ENCODE measurements at regions of chr3 and their contacts with region 1.

Region 1: DNA sequence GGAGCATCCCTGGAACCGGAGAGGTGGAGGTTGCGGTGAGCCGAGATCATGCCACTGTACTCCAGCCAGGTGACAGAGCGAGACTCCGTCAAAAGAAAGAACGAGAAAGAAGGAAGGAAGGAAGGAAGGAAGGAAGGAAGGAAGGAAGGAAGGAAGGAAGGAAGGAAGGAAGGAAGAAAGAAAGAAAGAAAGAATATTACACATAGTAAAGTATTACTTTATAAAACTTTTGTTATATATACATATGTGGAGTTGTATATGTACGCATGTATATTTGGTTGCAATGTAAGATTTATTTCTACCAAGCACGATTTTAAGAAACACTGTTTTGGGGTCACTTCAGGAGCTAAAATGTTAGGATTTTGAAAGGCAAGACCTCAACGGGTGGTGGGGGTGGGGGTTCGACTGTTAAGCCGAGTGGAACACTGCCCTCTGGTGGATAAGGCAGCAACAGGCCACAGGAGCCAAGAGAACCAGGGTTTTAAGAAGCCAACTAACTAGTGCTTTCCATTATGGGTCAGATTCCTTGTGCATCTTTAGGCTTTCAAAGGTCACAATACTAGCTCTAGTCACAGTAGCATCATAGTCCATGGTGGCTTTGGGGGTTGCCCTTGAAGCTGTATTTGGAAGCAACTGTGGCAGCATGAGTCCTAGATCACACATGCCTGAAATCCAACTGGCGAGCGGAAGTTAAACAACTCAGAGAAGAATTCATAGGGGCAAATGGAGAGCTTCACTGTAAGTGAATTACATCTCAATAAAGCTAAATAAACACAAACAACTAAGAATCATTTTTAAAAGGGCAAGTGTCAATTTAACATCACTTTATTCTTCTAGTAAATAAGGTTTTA is 22.5 kb downstream of the GLB1 start:
- DNase-seq: peak; percentile 31 to 79 (median 70)
- ATAC-seq: peak; percentile 73
- H3K4me3 ChIP-seq: no peak overlapping the region
- H3K4me3 Mint-ChIP-seq: no peak overlapping the region
- H3K27ac ChIP-seq: no peak overlapping the region
- H3K27ac Mint-ChIP-seq: no peak overlapping the region
- H3K4me1 ChIP-seq: no peaks in the 10 kb centered on the region
- H3K4me1 Mint-ChIP-seq: peaks cover 9% of the 10 kb centered on the region
- H3K27me3 ChIP-seq: no peaks in the 10 kb centered on the region
- H3K27me3 Mint-ChIP-seq: no peaks in the 10 kb centered on the region
- CTCF ChIP-seq: peak; percentile 77

Region 2: DNA sequence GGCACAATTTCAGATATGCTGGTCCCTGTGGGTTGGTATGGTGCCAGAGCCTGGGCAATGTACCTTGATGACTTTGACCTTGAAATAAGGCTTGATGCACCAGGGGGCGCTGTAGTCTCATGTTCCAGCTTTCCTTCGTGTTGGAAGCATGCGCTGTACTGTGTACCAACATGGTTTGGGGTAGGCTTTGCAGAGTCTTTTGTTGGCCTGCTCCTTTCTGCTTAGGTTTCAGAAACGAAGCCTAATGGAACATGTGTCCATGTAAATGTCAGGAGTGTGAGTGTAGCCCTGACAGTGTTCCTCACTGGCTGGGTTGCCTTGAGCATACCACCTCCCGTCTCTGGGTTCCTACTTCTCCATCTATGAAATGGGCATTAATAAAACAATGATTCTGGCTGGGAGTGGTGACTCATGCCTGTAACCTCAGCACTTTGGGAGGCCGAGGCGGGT is 126.6 kb before region 1 on chr3:
- CTCF ChIA-PET with region 1: interaction called, 272 read pairs
- POLR2A ChIA-PET with region 1: interaction called, 9 read pairs
- intact Hi-C with region 1: loop called (anchors 1 kb)
- DNase-seq: peak; percentile 82 to 96 (median 87)
- ATAC-seq: peak; percentile 79
- H3K4me3 ChIP-seq: no peak overlapping the region
- H3K4me3 Mint-ChIP-seq: no peak overlapping the region
- H3K27ac ChIP-seq: no peak overlapping the region
- H3K27ac Mint-ChIP-seq: no peak overlapping the region
- H3K4me1 ChIP-seq: peaks cover 4% of the 10 kb centered on the region
- H3K4me1 Mint-ChIP-seq: peaks cover 16% of the 10 kb centered on the region
- H3K27me3 ChIP-seq: no peaks in the 10 kb centered on the region
- H3K27me3 Mint-ChIP-seq: no peaks in the 10 kb centered on the region
- CTCF ChIP-seq: peak; percentile 78

Region 3: DNA sequence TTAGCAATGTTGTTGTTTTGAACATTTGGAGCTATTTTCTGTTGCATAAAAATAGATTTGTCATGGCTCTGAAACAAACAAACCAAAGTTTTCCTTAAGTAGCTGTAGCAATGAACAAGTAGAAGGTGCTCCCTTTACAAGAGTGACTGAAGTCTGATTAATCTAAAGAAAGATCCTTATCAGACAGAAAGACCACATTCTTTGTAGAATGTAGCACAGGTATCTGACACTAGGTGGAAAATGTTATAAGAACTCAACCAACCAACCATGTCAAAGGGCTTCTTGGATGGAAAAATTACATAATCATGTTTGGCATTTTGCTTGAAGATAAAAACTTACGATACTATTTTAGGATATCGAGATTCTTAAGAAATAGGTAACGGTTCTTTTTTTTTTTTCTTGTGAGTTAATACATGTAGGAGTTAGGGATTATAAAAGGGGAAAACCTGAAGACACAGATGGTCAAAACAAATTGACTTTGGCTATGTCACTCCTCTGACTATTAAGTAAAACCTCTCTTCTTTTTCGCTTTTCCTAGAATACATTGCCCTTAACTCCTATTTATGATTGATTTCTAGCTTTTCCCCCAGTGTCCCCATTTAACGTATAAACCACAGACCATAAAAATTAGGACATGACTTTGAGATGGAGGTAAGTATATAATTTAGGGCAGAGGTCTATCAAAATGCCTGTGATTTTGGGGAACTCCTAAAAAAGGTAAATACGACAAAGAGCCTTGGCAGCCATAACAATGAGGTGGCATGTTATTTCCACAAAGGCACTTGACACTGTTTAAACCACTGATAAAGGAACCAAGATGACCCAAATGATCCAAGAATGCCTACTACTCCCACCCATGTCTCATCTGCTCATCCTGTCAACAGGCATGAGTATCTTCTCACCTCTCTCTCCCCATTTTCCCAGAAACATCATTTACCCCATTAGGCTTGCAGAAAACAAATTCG is 51.0 kb before region 1 on chr3:
- CTCF ChIA-PET with region 1: interaction called, 23 read pairs
- POLR2A ChIA-PET with region 1: interaction called, 3 read pairs
- intact Hi-C with region 1: loop called (anchors 5 kb)
- DNase-seq: peak in 1 of 9 experiments; percentile 28
- ATAC-seq: peak; percentile 70
- H3K4me3 ChIP-seq: no peak overlapping the region
- H3K4me3 Mint-ChIP-seq: no peak overlapping the region
- H3K27ac ChIP-seq: no peak overlapping the region
- H3K27ac Mint-ChIP-seq: no peak overlapping the region
- H3K4me1 ChIP-seq: peaks cover 7% of the 10 kb centered on the region
- H3K4me1 Mint-ChIP-seq: peaks cover 28% of the 10 kb centered on the region
- H3K27me3 ChIP-seq: no peaks in the 10 kb centered on the region
- H3K27me3 Mint-ChIP-seq: no peaks in the 10 kb centered on the region
- CTCF ChIP-seq: no peak

Region 4: GRCh38 chr3:33041909-33042308 is 32.5 kb before region 1 on chr3:
- CTCF ChIA-PET with region 1: interaction called, 45 read pairs
- POLR2A ChIA-PET with region 1: interaction called, 4 read pairs
- intact Hi-C with region 1: loop called in 1 of 2 experiments (anchors 5 kb)
- DNase-seq: no peak
- ATAC-seq: no peak
- H3K4me3 ChIP-seq: no peak overlapping the region
- H3K4me3 Mint-ChIP-seq: no peak overlapping the region
- H3K27ac ChIP-seq: no peak overlapping the region
- H3K27ac Mint-ChIP-seq: no peak overlapping the region
- H3K4me1 ChIP-seq: peaks cover 33% of the 10 kb centered on the region
- H3K4me1 Mint-ChIP-seq: peaks cover 39% of the 10 kb centered on the region
- H3K27me3 ChIP-seq: no peaks in the 10 kb centered on the region
- H3K27me3 Mint-ChIP-seq: no peaks in the 10 kb centered on the region
- CTCF ChIP-seq: no peak

Region 5: DNA sequence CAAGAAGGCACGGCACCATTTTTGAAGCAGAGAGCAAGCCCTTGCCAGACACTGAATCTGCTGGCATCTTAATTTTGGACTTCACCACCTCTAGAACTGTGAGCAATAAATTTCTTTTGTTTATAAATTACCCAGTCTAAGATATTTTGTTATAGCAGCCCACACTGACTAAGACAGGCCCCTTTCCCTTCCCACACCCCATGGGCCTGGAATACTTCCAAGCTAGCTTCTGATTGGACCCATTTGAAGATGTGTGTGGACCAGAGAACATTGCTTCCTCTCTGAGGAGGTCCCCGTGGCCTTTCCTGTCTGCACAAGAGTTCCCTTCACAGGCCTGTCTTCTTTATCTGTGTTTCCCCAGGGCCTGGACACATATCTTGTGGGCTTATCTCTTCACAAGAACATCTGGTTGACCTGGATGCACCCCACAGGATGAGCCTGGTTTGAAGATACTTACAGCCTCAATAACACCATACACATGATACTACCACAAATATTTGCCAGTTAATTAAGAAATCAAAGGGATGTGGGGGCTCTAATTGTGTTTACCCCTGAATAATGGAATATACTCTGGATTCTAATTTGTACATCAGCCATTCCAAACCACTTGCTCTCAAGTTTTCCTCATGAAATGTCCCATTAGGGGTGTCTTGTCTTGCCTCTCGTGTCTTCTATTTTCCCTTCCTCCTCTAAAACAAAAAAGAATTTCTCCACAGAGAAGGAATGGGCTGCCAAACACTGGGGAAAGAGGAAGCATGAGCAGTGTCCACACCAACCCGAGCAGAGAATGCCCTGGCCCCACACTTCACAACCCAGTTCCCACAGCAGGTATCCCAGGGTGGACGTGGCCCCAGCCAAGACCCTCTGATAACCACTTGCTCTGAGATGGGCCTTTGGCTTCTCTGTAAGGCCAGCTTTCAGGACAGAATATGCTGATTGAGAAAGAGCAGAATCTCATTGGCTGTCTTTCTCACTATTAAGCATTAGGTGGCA is 20.0 kb before region 1 on chr3:
- CTCF ChIA-PET with region 1: interaction called, 45 read pairs
- POLR2A ChIA-PET with region 1: no interaction called
- intact Hi-C with region 1: no loop called
- DNase-seq: peak in 1 of 9 experiments; percentile 20
- ATAC-seq: no peak
- H3K4me3 ChIP-seq: peak overlapping the region in 1 of 2 experiments; percentile 17
- H3K4me3 Mint-ChIP-seq: no peak overlapping the region
- H3K27ac ChIP-seq: peak overlapping the region in 1 of 2 experiments; percentile 70
- H3K27ac Mint-ChIP-seq: peak overlapping the region; percentile 74
- H3K4me1 ChIP-seq: peaks cover 19% of the 10 kb centered on the region
- H3K4me1 Mint-ChIP-seq: peaks cover 55% of the 10 kb centered on the region
- H3K27me3 ChIP-seq: no peaks in the 10 kb centered on the region
- H3K27me3 Mint-ChIP-seq: no peaks in the 10 kb centered on the region
- CTCF ChIP-seq: no peak

Region 6: DNA sequence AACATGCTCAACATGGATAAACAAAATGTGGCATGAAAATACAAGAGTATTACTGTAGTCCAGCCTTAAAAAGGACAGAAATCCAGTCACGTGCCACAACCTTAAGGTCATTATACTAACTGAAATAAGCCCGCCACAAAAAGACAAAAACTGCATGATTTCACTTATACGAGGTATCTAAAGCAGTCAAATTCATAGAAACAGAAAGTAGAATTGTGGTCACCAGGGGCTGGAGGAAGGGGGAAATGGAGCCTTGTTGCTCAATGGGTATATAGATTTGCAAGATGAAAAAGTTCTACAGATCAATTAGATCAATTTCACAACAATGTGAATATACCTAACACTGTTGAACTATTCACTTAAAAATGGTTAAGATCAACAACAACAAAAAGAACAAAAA is 15.1 kb after region 1 on chr3:
- CTCF ChIA-PET with region 1: interaction called, 35 read pairs
- POLR2A ChIA-PET with region 1: interaction called, 3 read pairs
- intact Hi-C with region 1: no loop called
- DNase-seq: peak in 2 of 9 experiments; percentile 31 to 55
- ATAC-seq: peak; percentile 63
- H3K4me3 ChIP-seq: no peak overlapping the region
- H3K4me3 Mint-ChIP-seq: peak overlapping the region; percentile 13
- H3K27ac ChIP-seq: peak overlapping the region in 1 of 2 experiments; percentile 45
- H3K27ac Mint-ChIP-seq: peak overlapping the region; percentile 8
- H3K4me1 ChIP-seq: peaks cover 6% of the 10 kb centered on the region
- H3K4me1 Mint-ChIP-seq: peaks cover 71% of the 10 kb centered on the region
- H3K27me3 ChIP-seq: no peaks in the 10 kb centered on the region
- H3K27me3 Mint-ChIP-seq: no peaks in the 10 kb centered on the region
- CTCF ChIP-seq: no peak

Region 7: GRCh38 chr3:33360136-33360825 is 285.8 kb after region 1 on chr3:
- CTCF ChIA-PET with region 1: no interaction called
- POLR2A ChIA-PET with region 1: no interaction called
- intact Hi-C with region 1: no loop called
- DNase-seq: no peak
- ATAC-seq: no peak
- H3K4me3 ChIP-seq: no peak overlapping the region
- H3K4me3 Mint-ChIP-seq: no peak overlapping the region
- H3K27ac ChIP-seq: no peak overlapping the region
- H3K27ac Mint-ChIP-seq: no peak overlapping the region
- H3K4me1 ChIP-seq: no peaks in the 10 kb centered on the region
- H3K4me1 Mint-ChIP-seq: no peaks in the 10 kb centered on the region
- H3K27me3 ChIP-seq: no peaks in the 10 kb centered on the region
- H3K27me3 Mint-ChIP-seq: peaks cover 20% of the 10 kb centered on the region
- CTCF ChIP-seq: no peak

Region 8: DNA sequence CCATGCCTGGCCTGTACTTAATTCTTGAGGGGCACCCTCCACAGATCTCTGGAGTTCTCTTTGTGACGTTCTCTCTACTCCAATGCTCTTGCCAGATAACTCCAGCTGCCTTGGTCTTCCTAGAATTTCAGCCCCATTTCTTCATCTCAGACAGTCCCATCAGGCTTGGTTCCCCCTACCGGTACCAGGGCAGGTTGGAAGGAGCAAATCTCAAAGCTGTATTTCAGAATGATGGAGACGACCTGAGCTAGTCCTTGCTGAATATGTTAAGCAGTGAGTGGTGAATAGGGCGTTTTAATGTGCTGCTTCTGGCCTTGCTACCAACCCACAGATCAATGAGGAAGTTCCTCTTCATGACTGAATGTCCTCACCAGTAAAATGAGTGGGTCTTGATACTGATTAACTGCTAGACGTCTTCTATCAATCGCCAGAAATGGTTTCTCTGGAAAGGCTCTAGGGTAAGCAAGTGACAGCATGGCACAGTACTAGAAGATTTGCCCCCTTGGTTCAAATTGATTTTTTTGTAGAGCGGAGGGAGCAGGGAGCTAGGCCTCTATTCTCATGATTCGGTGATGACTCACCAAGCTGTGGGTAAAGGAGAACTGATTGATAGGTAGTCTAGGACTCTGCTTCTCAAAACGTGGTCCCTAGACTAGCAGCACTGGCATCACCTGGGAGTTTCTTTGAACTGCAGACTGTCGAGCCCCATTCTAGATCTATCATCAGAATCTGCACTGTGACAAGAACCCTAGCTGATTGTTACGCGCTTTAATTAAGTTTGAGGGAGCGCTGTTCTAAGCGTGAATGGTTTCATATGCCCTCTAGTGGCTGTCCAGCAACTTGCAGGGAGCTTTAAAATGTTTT is 298.0 kb after region 1 on chr3:
- CTCF ChIA-PET with region 1: interaction called, 15 read pairs
- POLR2A ChIA-PET with region 1: no interaction called
- intact Hi-C with region 1: loop called (anchors 2 to 5 kb)
- DNase-seq: peak in 8 of 9 experiments; percentile 25 to 60 (median 43)
- ATAC-seq: peak; percentile 62
- H3K4me3 ChIP-seq: no peak overlapping the region
- H3K4me3 Mint-ChIP-seq: no peak overlapping the region
- H3K27ac ChIP-seq: no peak overlapping the region
- H3K27ac Mint-ChIP-seq: no peak overlapping the region
- H3K4me1 ChIP-seq: no peaks in the 10 kb centered on the region
- H3K4me1 Mint-ChIP-seq: peaks cover 3% of the 10 kb centered on the region
- H3K27me3 ChIP-seq: peaks cover 0 to 4% of the 10 kb centered on the region in 2 experiments
- H3K27me3 Mint-ChIP-seq: peaks cover 16% of the 10 kb centered on the region
- CTCF ChIP-seq: peak; percentile 98

Measured in CD8-positive, alpha-beta T cell (primary cell).